AG04449 (cell line): ENCODE measurements at regions of chr9 and their contacts with region 1.

Region 1: GRCh38 chr9:108761655-108762347 is 94.0 kb downstream of the ACTL7B start:
- DNase-seq: no peak
- H3K4me3 ChIP-seq: no peak overlapping the region
- CTCF ChIP-seq: peak; percentile 80

Region 2: DNA sequence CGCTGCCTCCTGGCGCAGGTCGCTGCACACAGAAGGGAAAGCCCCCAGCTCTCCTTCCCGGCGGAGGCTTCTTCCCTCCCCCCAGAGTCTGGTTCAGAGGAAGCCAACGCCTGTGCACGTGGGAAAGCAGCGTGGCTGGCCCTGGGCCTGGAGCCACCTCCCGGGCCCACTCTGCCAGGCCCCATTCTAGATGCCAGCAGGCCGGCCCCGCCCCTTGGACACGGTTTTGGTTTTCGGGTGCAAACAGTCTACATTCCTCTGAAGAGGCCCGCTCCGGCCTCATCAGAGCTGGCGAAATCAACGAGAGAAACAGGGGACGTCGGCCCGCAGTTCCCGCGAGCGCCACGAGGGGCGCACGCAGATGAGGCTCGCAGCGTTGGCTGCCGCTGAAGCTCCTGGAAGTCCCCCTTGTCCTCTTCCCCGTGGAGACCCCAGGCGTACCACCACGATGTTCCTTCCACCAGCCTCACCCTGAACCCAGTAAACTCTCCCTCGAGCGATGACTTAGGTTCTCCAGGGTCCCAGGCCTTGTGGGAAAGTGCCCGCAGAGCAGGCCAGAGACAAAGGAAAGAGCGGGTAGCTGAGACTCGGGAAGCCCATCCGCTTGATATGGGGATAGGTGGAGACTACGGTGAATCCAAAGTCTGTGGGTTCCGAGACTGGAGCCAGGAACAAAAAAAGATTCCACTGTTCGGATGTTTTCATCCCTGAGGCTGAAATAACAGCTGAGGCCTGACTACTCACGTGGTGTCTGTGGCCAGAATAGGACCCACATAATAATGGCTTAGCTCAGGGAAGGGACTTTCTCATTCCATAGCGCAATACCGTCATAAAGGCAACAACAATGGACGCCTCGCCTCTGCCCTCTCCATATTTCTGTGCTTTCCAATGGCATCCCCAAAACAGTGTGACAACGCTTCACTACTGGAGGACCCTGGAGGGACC is 1336.4 kb before region 1 on chr9:
- CTCF ChIA-PET with region 1: interaction called, 41 read pairs
- POLR2A ChIA-PET with region 1: no interaction called
- DNase-seq: no peak
- H3K4me3 ChIP-seq: peak overlapping the region; percentile 27
- CTCF ChIP-seq: peak; percentile 92

Region 3: DNA sequence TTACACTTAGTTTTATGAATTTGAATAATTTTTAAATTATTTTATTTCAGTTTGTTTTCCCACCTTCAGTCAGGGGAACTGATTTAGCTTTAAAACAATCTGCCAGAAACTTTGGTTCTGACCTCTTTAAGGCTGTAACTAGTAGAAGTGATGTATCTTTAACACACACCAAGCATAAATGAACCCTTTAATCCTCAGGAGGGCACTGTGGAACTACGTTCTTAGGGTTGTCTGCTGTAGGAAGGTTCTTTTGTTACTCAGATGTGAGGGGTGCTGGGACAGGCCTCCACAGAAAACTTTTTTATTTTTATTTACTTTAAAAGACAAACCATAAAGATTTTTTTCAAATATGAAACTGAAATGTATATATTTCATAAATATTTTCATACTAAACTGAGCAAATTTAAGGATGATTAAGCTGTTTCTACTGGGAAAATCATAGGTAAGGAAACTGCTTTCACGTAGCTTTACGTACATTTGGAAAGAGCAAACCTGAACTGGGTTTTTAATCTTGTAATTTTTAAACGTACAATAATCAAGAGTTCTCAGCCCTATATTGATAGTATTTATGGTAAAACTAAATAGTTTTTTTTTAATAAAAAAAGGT is 1277.6 kb before region 1 on chr9:
- CTCF ChIA-PET with region 1: interaction called, 12 read pairs
- POLR2A ChIA-PET with region 1: no interaction called
- DNase-seq: peak; percentile 34
- H3K4me3 ChIP-seq: no peak overlapping the region
- CTCF ChIP-seq: peak; percentile 61

Region 4: GRCh38 chr9:108775901-108776306 is 14.1 kb after region 1 on chr9:
- CTCF ChIA-PET with region 1: interaction called, 27 read pairs
- POLR2A ChIA-PET with region 1: no interaction called
- DNase-seq: no peak
- H3K4me3 ChIP-seq: no peak overlapping the region
- CTCF ChIP-seq: no peak

Region 5: DNA sequence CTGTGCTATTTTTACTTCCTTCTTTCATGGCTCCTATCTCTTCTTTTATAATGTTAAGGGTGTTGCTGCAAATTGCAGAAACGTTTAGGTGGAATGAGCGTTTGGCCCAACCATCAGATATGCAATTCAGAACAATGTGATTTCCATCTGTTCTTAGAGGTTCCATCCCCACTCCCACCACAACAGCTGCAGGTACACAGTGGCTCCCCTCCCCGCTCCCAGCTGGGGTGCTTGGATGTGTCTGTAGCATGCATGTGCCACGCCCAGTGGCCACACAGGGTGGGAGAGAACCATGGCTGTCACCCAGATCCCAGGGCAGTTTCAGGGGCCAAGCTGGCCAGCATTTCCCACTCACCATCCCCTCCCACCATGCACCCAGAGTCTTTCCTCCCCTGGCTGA is 31.8 kb after region 1 on chr9:
- CTCF ChIA-PET with region 1: no interaction called
- POLR2A ChIA-PET with region 1: no interaction called
- DNase-seq: no peak
- H3K4me3 ChIP-seq: no peak overlapping the region
- CTCF ChIP-seq: no peak